ENCODE measurements at regions of chr1 and their contacts with region 1.

Region 1: GRCh38 chr1:46616277-46617107 is at the start of gene MOB3C:
- DNase-seq: peak; percentile 66
- H3K4me3 ChIP-seq: peak within 1 kb of the TSS; percentile 80 to 85 (median 81)
- H3K27ac ChIP-seq: peak within 1 kb of the TSS; percentile 49
- H3K4me1 ChIP-seq: peaks cover 40% of the 10 kb centered on the region
- H3K27me3 ChIP-seq: no peaks in the 10 kb centered on the region
- CTCF ChIP-seq: no peak
- total RNA-seq, gene MOB3C: 10.2 to 12.8 TPM

Region 2: DNA sequence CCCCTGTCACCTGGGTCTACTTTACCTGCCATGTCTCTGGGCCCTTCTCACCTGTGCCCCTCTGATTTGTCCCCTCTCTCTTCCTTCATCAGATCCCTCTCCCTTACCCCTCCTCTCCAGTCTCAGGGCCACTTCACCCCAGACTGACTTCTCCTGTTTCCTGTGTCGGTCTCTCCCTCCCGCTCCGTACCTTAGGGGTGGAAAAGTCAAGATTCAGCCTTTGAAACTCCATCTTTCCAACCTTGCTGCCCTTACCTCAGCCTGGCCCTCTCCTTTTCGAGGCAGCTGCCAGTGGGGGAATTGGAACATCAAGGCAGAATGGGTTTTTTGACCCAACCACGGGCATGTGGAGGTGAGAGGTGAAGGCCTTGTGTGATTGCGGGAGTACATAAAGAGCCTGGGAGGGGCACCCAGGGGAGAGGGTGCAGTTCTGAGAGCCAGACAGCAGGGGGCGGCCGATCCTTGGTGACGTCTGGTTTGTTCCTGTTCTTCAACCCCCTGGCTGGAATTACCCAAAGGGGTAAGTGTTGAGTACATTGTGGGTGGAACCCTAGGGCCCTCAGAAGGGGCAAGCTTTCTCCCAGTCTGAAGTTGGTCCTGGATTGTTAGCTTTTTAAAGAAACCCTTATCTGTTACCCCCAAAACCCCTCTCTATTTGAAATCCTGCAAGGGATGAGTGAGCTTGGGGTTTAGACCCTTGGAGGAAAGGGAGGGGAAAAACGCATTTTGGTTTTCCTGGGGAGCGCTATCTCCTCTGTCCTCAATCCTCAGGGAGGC is 139.2 kb before region 1 on chr1:
- CTCF ChIA-PET with region 1: no interaction called
- dilution Hi-C with region 1: no loop called
- in situ Hi-C with region 1: no loop called
- intact Hi-C with region 1: no loop called
- DNase-seq: peak; percentile 58
- H3K4me3 ChIP-seq: no peak overlapping the region
- H3K27ac ChIP-seq: no peak overlapping the region
- H3K4me1 ChIP-seq: no peaks in the 10 kb centered on the region
- H3K27me3 ChIP-seq: no peaks in the 10 kb centered on the region
- CTCF ChIP-seq: peak; percentile 86 to 90

Region 3: GRCh38 chr1:46547481-46548383 is 68.8 kb before region 1 on chr1:
- CTCF ChIA-PET with region 1: no interaction called
- dilution Hi-C with region 1: loop called (anchors 5 kb)
- in situ Hi-C with region 1: no loop called
- intact Hi-C with region 1: no loop called
- DNase-seq: peak; percentile 35
- H3K4me3 ChIP-seq: no peak overlapping the region
- H3K27ac ChIP-seq: no peak overlapping the region
- H3K4me1 ChIP-seq: no peaks in the 10 kb centered on the region
- H3K27me3 ChIP-seq: peaks cover 20% of the 10 kb centered on the region
- CTCF ChIP-seq: peak; percentile 53 to 55

Region 4: DNA sequence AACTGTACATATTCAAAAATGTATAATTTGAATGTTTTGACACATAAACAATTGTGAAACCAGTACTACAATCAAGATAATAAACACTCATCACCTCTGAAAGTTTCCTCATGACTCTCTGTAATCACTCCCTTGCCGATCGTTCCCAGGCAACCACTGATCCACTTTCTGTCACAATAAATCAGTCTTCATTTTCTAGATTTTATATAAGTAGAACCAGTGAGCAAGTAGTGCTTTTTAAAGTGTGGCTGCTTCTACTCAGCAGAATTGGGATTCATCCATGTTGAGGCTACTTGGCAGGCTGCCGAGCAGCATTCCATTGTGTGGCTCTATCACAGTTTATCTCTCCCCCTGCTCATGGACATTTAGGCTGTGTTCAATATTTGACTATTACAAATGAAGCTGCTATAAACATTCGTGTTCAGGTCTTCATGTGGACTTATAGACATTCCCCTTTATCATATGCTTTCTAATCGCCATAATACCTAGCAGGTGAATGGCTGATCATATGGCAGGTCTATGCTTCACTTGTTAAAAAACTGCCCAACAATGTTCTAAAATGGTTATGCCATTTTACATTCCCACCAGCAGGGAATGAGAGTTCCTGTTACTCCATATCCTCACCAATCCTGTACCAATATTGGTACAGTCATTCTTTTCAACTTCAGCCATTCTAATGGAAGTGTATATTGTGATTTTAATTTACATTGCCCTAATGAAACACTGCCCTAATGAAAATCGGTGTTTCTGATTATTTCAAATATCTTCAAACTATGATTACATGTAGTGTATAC is 75.7 kb after region 1 on chr1:
- CTCF ChIA-PET with region 1: no interaction called
- dilution Hi-C with region 1: loop called (anchors 5 kb)
- in situ Hi-C with region 1: no loop called
- intact Hi-C with region 1: no loop called
- DNase-seq: no peak
- H3K4me3 ChIP-seq: no peak overlapping the region
- H3K27ac ChIP-seq: no peak overlapping the region
- H3K4me1 ChIP-seq: no peaks in the 10 kb centered on the region
- H3K27me3 ChIP-seq: no peaks in the 10 kb centered on the region
- CTCF ChIP-seq: peak; percentile 16 to 24

Region 5: DNA sequence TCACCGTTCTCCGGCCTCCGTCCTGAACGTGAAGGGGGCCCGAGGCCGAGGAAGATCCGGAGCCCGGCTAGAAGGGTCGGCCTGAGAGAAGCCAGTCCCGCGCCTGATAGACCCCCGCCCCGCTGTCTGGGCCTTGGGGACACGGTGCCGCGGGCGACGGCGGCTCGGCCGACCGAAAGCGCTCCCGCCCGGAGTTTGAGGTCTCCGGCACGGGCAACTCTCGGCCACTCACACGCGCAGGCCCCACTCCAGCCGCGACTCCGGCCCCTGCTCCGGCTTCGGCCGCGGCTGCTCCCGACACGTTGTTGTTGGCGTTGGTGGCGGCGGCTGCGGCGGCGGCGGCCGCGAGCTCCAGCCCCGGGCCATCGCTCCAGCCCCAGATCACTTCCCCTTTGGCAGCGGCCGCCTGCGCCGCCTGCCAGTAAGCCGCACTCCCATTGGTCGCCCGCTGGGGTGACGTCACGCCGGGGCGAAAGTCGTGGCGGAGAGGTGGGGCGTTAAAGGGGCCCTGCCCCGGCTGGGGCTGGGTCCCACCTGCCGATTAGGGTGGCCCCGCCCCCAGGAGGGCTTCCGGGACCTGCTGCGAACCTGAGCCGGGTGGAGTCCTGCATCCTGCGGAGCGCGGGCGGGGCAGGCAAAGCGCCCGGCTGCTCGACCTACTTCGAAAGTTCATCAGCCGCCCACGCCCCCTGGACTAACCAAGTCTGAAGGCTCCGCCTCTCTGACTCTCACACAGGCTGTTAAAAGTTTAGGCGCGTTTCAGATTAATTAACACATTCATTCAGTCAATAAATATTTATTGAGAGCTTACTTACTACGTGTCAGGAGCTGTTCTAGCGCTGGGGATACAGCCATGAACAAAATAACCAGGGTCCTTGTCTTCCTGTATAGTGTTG is 102.5 kb after region 1 on chr1 and contains the start of gene EFCAB14:
- CTCF ChIA-PET with region 1: interaction called, 5 read pairs
- dilution Hi-C with region 1: no loop called
- in situ Hi-C with region 1: loop called in 1 of 2 experiments (anchors 10 kb)
- intact Hi-C with region 1: loop called (anchors 5 kb)
- DNase-seq: peak; percentile 97
- H3K4me3 ChIP-seq: peak within 1 kb of the TSS; percentile 93 to 94 (median 93)
- H3K27ac ChIP-seq: peak within 1 kb of the TSS; percentile 72
- H3K4me1 ChIP-seq: peaks cover 21% of the 10 kb centered on the region
- H3K27me3 ChIP-seq: no peaks in the 10 kb centered on the region
- CTCF ChIP-seq: no peak
- total RNA-seq, gene EFCAB14: 51.3 to 70.5 TPM

Region 6: DNA sequence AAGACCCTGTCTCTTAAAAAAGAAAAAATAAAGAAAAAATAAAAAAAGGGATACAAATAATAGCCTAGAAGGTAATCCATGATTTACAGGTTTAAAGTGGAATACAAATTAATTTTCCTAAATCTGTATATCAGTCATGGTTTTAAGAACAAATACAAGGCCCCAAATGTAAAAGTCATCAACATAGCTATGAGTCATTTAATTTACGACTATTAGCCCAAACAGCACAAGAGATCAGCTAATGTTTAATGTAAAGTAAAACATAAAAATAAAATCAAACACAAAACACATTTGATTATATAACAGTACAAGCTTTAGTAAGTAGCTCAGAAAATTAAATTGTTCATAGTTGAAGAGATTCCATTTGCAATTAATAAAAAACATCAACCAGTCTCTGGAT is 635.9 kb after region 1 on chr1:
- CTCF ChIA-PET with region 1: no interaction called
- dilution Hi-C with region 1: no loop called
- in situ Hi-C with region 1: no loop called
- intact Hi-C with region 1: no loop called
- DNase-seq: no peak
- H3K4me3 ChIP-seq: no peak overlapping the region
- H3K27ac ChIP-seq: no peak overlapping the region
- H3K4me1 ChIP-seq: peaks cover 11% of the 10 kb centered on the region
- H3K27me3 ChIP-seq: no peaks in the 10 kb centered on the region
- CTCF ChIP-seq: no peak